CD8-positive, alpha-beta T cell (primary cell): ENCODE measurements at regions of chrX and their contacts with region 1.

Region 1: DNA sequence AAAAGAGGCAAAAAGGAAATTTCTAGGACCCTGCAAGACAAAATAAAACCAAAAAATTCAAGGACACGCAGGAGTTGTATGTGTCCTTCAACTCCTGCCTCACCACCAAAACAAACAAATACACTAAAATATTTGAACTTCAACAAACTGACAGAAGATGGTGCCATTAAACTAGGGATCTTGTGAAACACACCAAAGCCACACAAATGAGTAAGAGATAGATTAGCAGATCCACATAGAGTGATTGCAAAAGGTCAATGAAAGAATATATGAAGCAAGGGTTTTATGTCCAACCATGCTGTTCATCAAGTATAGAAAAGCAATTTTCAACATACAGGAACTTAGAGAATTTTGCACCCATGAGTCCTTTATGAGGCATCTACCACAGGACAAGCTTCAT is 40.1 kb upstream of the SCML1 start:
- DNase-seq: peak in 2 of 9 experiments; percentile 5 to 29
- ATAC-seq: no peak
- H3K4me3 ChIP-seq: no peak overlapping the region
- H3K4me3 Mint-ChIP-seq: no peak overlapping the region
- H3K27ac ChIP-seq: no peak overlapping the region
- H3K27ac Mint-ChIP-seq: no peak overlapping the region
- H3K4me1 ChIP-seq: no peaks in the 10 kb centered on the region
- H3K4me1 Mint-ChIP-seq: no peaks in the 10 kb centered on the region
- H3K27me3 ChIP-seq: no peaks in the 10 kb centered on the region
- H3K27me3 Mint-ChIP-seq: no peaks in the 10 kb centered on the region
- CTCF ChIP-seq: no peak

Region 2: DNA sequence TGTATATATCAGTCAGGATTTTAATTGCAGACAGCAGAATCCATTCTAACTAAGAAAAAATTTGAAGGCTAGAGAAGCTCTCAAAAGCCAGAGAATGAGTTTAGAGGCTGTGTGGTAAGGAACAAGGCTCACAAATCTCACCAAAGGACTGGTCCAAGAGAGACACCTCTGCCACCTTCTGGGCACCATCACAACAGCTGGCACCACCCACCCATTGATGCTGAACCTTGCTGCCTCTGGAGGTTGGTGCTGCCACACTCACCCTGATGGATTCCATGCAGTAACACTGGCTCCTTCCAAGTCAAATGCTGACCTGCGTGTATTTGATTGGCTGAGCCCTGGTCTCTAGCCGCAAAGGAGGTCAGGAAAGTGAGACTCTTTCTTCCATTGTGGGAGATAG is 422.7 kb after region 1 on chrX:
- CTCF ChIA-PET with region 1: no interaction called
- POLR2A ChIA-PET with region 1: no interaction called
- intact Hi-C with region 1: loop called in 1 of 2 experiments (anchors 5 kb)
- DNase-seq: peak in 2 of 9 experiments; percentile 10 to 21
- ATAC-seq: no peak
- H3K4me3 ChIP-seq: no peak overlapping the region
- H3K4me3 Mint-ChIP-seq: no peak overlapping the region
- H3K27ac ChIP-seq: no peak overlapping the region
- H3K27ac Mint-ChIP-seq: no peak overlapping the region
- H3K4me1 ChIP-seq: no peaks in the 10 kb centered on the region
- H3K4me1 Mint-ChIP-seq: no peaks in the 10 kb centered on the region
- H3K27me3 ChIP-seq: no peaks in the 10 kb centered on the region
- H3K27me3 Mint-ChIP-seq: peaks cover 4% of the 10 kb centered on the region
- CTCF ChIP-seq: no peak

Region 3: DNA sequence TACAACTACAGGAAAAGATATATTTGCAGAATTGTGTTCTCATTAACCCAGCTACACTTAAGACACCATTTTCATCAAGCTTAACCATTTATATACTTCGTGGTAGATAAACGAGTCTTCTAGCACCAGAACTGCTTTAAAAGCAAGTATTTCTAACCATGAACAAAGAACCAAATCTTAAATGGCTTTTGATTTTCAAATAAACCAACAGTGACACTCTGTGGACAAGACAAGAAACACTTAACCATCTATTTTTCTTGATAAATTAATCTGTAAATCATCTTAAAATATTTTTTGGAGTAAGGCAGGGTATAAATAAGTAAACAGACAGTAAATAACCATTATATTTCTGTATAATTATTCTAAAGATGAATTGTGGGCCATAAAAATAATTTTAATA is 513.3 kb after region 1 on chrX:
- CTCF ChIA-PET with region 1: no interaction called
- POLR2A ChIA-PET with region 1: no interaction called
- intact Hi-C with region 1: loop called (anchors 2 to 5 kb)
- DNase-seq: peak in 1 of 9 experiments; percentile 7
- ATAC-seq: no peak
- H3K4me3 ChIP-seq: no peak overlapping the region
- H3K4me3 Mint-ChIP-seq: no peak overlapping the region
- H3K27ac ChIP-seq: no peak overlapping the region
- H3K27ac Mint-ChIP-seq: no peak overlapping the region
- H3K4me1 ChIP-seq: no peaks in the 10 kb centered on the region
- H3K4me1 Mint-ChIP-seq: no peaks in the 10 kb centered on the region
- H3K27me3 ChIP-seq: no peaks in the 10 kb centered on the region
- H3K27me3 Mint-ChIP-seq: peaks cover 2% of the 10 kb centered on the region
- CTCF ChIP-seq: no peak